ENCODE measurements at regions of chr20 and their contacts with region 1.

Region 1: DNA sequence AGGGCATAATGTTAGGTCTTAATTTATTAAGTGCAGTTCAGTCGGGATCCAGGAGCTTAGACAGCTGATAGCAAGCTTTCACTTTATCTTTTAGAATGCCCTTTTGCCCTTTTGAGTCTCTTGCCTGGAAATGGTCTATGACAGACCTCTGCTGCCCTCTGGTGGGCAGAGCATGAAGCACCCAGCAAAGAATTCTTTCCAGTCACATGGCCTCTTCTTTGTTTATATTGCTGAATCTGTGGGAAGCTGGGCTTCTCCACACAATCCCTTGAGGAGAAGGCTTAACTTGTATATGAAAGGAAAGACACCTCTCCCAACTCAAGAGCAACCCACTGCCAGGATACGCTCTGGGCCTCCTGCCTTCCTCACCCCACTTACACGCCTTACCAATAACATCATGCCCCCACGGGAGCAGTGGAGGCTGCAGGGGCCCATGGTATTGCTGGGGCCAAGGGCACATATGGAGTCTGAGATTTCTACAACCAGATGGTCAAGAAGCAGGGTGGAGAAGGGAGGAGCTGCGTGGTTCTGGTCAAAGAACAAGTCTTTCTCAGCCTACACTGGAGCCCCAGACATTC is 20.4 kb downstream of the WFDC3 start:
- DNase-seq: peak; percentile 85
- H3K4me3 Mint-ChIP-seq: no peak overlapping the region
- H3K27ac Mint-ChIP-seq: no peak overlapping the region
- H3K4me1 Mint-ChIP-seq: peaks cover 5% of the 10 kb centered on the region
- H3K27me3 Mint-ChIP-seq: peaks cover 24% of the 10 kb centered on the region

Region 2: DNA sequence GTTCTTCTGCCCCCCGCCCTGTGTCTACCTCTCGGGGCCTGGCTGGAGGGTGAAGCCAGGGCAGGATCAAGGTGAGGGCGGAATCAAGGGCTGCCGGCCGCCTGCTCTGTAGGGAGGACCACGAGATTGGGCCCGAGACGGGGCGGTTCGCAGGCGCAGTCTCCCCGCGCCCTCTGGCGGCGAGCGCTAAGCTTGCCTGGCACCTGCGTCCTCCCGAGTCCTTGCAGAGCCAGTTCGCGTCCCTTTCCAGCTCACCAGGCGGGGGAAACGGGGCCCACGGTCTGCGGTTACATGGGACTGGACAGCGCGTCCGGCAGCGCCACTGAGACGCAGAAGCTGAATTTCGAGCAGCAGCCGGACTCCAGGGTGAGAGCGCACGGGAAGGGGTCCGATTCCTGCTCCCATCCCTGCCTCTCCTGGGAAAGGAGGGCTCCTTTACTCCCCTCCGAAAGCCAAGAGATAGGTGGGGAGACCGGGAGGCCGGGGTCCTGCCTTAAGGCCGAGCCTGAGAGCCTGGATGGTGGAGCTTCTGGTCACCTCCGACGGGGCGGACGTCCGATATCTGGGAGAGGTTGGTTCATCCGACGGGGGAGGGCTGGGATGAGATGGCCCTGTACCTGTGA is 459.6 kb before region 1 on chr20:
- CTCF ChIA-PET with region 1: interaction called, 19 read pairs
- POLR2A ChIA-PET with region 1: no interaction called
- DNase-seq: peak; percentile 69
- H3K4me3 Mint-ChIP-seq: no peak overlapping the region
- H3K27ac Mint-ChIP-seq: no peak overlapping the region
- H3K4me1 Mint-ChIP-seq: peaks cover 13% of the 10 kb centered on the region
- H3K27me3 Mint-ChIP-seq: peaks cover 33% of the 10 kb centered on the region

Region 3: GRCh38 chr20:45322952-45323383 is 448.3 kb before region 1 on chr20:
- CTCF ChIA-PET with region 1: interaction called, 19 read pairs
- POLR2A ChIA-PET with region 1: interaction called, 3 read pairs
- DNase-seq: no peak
- H3K4me3 Mint-ChIP-seq: no peak overlapping the region
- H3K27ac Mint-ChIP-seq: no peak overlapping the region
- H3K4me1 Mint-ChIP-seq: peaks cover 30% of the 10 kb centered on the region
- H3K27me3 Mint-ChIP-seq: no peaks in the 10 kb centered on the region

Region 4: DNA sequence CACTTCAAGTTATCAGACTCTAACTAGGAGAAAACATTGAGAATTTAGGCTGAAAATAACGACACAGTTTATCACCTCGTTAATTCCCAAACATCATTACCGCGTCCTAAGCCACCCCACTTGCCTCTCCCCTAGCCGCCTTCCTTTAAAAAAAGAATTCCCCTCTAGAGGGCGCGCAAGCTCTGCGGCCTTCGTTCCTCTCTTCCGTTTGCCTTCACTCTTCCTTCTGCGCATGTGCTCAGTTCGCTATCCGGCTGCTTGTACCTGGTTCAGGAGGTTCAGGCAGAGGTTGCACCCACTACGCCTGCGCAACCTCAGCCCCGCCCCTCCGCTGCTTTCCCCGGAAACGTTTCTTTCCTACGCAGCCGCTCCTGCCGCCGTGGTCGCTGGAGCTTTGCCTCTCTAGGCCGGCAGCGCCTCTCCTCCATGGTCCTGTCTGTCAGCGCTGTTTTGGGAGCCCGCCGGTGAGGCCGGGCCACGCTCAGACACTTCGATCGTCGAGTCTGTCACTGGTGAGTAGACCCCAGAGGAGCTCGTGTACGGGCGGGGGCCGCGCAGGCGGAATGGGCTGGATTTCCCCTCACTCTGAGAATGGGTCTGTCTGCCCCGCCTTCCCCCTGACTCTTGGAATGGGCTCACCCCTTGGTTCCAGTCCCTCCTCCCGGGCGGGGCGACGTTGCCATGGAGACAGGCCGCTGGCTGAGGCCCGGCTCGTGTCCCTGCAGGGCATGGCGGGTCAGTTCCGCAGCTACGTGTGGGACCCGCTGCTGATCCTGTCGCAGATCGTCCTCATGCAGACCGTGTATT is 408.3 kb before region 1 on chr20 and contains the start of gene SYS1:
- CTCF ChIA-PET with region 1: interaction called, 18 read pairs
- POLR2A ChIA-PET with region 1: interaction called, 3 read pairs
- DNase-seq: peak; percentile 98
- H3K4me3 Mint-ChIP-seq: peak within 1 kb of the TSS; percentile 92
- H3K27ac Mint-ChIP-seq: peak within 1 kb of the TSS; percentile 91
- H3K4me1 Mint-ChIP-seq: peaks cover 65% of the 10 kb centered on the region
- H3K27me3 Mint-ChIP-seq: no peaks in the 10 kb centered on the region
- total RNA-seq, gene SYS1: 22.1 to 24.2 TPM

Region 5: GRCh38 chr20:45450097-45450818 is 321.0 kb before region 1 on chr20:
- CTCF ChIA-PET with region 1: interaction called, 23 read pairs
- POLR2A ChIA-PET with region 1: no interaction called
- DNase-seq: no peak
- H3K4me3 Mint-ChIP-seq: no peak overlapping the region
- H3K27ac Mint-ChIP-seq: no peak overlapping the region
- H3K4me1 Mint-ChIP-seq: peaks cover 10% of the 10 kb centered on the region
- H3K27me3 Mint-ChIP-seq: peaks cover 4% of the 10 kb centered on the region

Region 6: DNA sequence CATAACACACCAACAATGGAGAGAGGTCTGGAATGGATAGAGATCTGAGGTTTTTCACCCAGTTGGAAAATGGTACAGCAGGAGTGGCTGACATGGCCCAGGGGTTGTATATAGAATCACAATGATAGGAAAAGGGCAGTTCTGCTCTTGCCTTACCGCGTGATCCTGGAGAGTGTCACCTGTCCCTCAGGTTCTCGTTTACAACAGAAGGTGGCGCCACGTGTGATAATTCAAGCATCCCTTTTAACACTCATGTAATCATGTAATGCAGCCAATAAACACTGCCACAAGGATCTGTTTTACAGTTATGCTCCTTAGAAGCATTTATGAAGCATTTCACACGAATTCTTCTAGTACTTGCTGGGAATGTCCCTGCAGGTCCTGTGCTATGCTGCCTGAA is 314.6 kb before region 1 on chr20:
- CTCF ChIA-PET with region 1: interaction called, 23 read pairs
- POLR2A ChIA-PET with region 1: no interaction called
- DNase-seq: peak; percentile 48
- H3K4me3 Mint-ChIP-seq: no peak overlapping the region
- H3K27ac Mint-ChIP-seq: no peak overlapping the region
- H3K4me1 Mint-ChIP-seq: no peaks in the 10 kb centered on the region
- H3K27me3 Mint-ChIP-seq: peaks cover 10% of the 10 kb centered on the region

Region 7: GRCh38 chr20:45629496-45630100 is 141.7 kb before region 1 on chr20 and contains the start of gene WFDC10A:
- CTCF ChIA-PET with region 1: interaction called, 16 read pairs
- POLR2A ChIA-PET with region 1: no interaction called
- DNase-seq: peak; percentile 23
- H3K4me3 Mint-ChIP-seq: no peak within 1 kb of the TSS
- H3K27ac Mint-ChIP-seq: no peak within 1 kb of the TSS
- H3K4me1 Mint-ChIP-seq: no peaks in the 10 kb centered on the region
- H3K27me3 Mint-ChIP-seq: peaks cover 23% of the 10 kb centered on the region
- total RNA-seq, gene WFDC10A: not detected